Common myeloid progenitor, CD34-positive (primary cell): ENCODE measurements at regions of chr10 and their contacts with region 1.

Region 1: DNA sequence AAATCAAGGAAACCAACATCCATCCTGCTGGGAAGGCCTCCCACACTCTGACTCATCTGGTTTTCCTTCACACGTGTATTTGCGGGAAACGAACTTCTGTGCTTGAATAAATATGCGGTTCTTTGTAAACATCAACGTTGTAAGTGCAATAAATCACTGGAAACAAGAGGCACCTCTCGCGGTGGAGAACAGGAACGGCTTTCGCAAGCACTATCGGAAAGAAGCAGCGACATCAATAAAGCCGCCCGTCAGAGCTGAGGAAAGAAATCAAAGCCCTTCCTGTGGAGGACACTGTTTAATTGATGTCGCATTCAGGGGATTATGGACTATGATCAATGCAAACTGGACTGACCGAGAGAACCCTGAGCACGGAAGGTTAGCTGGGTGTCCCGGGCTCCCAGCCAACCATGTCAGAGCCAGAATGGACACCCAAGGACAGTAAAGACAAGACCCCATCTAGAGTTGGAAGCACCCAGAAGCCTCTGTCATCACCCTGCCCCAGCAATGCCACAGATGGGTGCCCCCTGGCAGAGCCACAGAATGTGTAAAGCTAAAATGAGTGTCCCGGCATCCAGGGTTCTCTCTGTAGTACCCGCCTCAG is 37.6 kb downstream of the OAT start:
- DNase-seq: peak; percentile 11 to 61 (median 45)
- H3K4me3 ChIP-seq: no peak overlapping the region
- H3K27ac ChIP-seq: no peak overlapping the region
- H3K4me1 ChIP-seq: peaks cover 0 to 9% (median 5%) of the 10 kb centered on the region in 4 experiments
- H3K27me3 ChIP-seq: peaks cover 0 to 50% (median 17%) of the 10 kb centered on the region in 5 experiments

Region 2: GRCh38 chr10:123994417-123995081 is 386.6 kb before region 1 on chr10:
- CTCF ChIA-PET with region 1: interaction called, 22 read pairs
- POLR2A ChIA-PET with region 1: no interaction called
- DNase-seq: peak; percentile 62 to 67 (median 62)
- H3K4me3 ChIP-seq: peak overlapping the region in 5 of 7 experiments; percentile 19 to 66 (median 48)
- H3K27ac ChIP-seq: no peak overlapping the region
- H3K4me1 ChIP-seq: peaks cover 0 to 21% (median 9%) of the 10 kb centered on the region in 4 experiments
- H3K27me3 ChIP-seq: peaks cover 8 to 61% (median 13%) of the 10 kb centered on the region in 5 experiments

Region 3: DNA sequence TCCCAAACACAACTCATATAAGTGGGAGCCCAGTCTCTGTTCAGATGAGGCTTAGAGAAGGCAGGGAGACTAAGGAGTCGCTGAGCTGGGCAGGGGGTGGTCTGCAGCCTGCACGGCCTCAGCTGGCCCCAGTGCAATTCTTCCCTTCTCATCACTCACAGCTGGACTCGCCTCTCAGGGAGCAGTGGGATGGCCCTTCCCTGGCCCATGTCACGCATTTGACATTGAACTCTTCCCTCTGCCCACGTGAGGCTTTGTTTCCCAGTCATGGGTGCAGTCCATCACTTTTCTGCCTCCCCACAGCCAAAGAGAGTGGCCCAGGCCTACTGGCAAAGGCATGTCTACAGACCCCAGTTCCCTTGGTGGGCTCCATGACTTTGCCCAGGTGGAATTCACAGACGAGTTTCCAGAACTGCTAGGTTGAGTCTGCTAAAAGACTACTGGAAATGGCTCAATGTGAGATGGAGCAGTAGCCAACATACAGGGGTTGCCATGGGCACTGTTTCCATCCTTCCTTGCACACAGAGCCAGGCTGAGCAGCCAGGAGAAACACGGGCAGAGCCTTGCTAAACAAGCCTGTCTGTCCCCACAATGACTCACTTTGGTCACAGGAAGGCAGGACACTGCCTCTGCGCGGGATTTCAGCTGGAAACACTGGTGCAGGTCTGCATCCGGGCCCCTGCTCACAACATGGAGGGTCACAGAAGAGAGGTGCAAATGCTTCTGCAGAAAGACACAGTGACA is 52.5 kb before region 1 on chr10:
- CTCF ChIA-PET with region 1: no interaction called
- POLR2A ChIA-PET with region 1: no interaction called
- DNase-seq: no peak
- H3K4me3 ChIP-seq: no peak overlapping the region
- H3K27ac ChIP-seq: no peak overlapping the region
- H3K4me1 ChIP-seq: peaks cover 0 to 9% (median 7%) of the 10 kb centered on the region in 4 experiments
- H3K27me3 ChIP-seq: no peaks in the 10 kb centered on the region

Region 4: GRCh38 chr10:124364633-124365032 is 16.5 kb before region 1 on chr10:
- CTCF ChIA-PET with region 1: interaction called, 12 read pairs
- POLR2A ChIA-PET with region 1: interaction called, 3 read pairs
- DNase-seq: no peak
- H3K4me3 ChIP-seq: no peak overlapping the region
- H3K27ac ChIP-seq: no peak overlapping the region
- H3K4me1 ChIP-seq: peaks cover 0 to 20% (median 18%) of the 10 kb centered on the region in 4 experiments
- H3K27me3 ChIP-seq: no peaks in the 10 kb centered on the region

Region 5: DNA sequence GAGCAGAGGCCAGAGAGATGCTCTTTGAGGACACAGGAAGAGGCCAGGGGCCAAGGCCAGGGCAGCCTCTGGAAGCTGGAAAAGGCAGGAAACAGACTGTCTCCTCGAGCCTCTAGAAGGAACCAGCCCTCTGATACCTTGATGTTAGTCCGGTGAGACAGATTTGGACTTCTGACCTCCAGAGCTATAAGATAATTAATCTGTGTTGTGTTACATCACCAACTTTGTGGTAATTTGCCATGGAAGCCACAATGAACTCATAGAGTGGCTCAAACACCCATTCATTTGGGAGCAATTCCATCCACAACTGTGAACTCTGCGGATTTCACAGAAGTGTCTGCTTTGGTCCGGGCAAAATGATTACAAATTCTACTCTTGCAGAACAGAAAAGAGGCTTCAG is 11.1 kb before region 1 on chr10:
- CTCF ChIA-PET with region 1: interaction called, 12 read pairs
- POLR2A ChIA-PET with region 1: interaction called, 3 read pairs
- DNase-seq: no peak
- H3K4me3 ChIP-seq: no peak overlapping the region
- H3K27ac ChIP-seq: no peak overlapping the region
- H3K4me1 ChIP-seq: peaks cover 0 to 32% (median 26%) of the 10 kb centered on the region in 4 experiments
- H3K27me3 ChIP-seq: no peaks in the 10 kb centered on the region